ENCODE measurements at regions of chr14 and their contacts with region 1.

Region 1: GRCh38 chr14:65042731-65043372 is 56.2 kb downstream of the FNTB start:
- DNase-seq: no peak
- ATAC-seq: no peak
- H3K4me3 ChIP-seq: no peak overlapping the region
- H3K27ac ChIP-seq: no peak overlapping the region
- H3K4me1 ChIP-seq: no peaks in the 10 kb centered on the region
- H3K27me3 ChIP-seq: no peaks in the 10 kb centered on the region
- CTCF ChIP-seq: no peak
- POLR2A ChIP-seq: no peak
- RAD21 ChIP-seq: no peak

Region 2: GRCh38 chr14:64919622-64920021 is 123.2 kb before region 1 on chr14:
- CTCF ChIA-PET with region 1: no interaction called
- POLR2A ChIA-PET with region 1: interaction called, 10 read pairs
- dilution Hi-C with region 1: no loop called
- in situ Hi-C with region 1: no loop called
- intact Hi-C with region 1: no loop called
- DNase-seq: no peak
- ATAC-seq: no peak
- H3K4me3 ChIP-seq: no peak overlapping the region
- H3K27ac ChIP-seq: no peak overlapping the region
- H3K4me1 ChIP-seq: peaks cover 6% of the 10 kb centered on the region
- H3K27me3 ChIP-seq: no peaks in the 10 kb centered on the region
- CTCF ChIP-seq: no peak
- POLR2A ChIP-seq: no peak
- RAD21 ChIP-seq: no peak

Measured in IMR-90 (cell line).